Gastrocnemius medialis (tissue), 4 donors: ENCODE measurements at regions of chr12 and their contacts with region 1.

Region 1: DNA sequence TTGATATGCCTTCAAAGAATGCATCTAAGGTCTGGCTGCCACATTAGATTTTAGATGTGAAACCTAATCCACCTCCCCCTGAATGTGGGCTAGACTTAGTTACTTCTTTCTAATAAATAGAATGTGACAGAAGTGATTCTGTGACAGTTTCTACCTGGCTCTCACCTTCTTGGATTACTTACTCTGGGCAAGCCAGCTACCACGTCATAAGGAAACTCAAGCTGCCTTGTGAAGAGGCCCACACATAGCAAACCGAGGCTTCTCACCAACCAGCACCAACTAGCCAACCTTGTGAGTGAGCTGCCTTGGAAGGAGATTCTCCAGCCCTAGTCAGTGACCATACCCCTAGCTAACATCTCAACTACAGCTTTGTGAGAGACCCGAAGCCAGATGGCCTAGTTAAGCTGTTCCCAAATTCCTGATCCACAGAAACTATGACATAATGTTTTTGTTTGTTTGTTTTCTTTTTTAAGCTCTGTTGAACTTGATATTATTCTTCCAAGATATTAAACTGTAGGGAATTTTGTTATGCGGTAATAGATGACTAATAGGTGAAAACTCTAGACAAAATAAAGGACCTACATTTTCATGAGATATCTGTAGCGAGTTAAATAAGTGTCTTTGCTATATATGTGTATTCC is 6.2 kb downstream of the GPR19 start:
- DNase-seq: no peak
- ATAC-seq: no peak
- H3K4me3 ChIP-seq: no peak overlapping the region
- H3K27ac ChIP-seq: no peak overlapping the region
- H3K4me1 ChIP-seq: peaks cover under 1 to 3% of the 10 kb centered on the region in 2 donors
- H3K27me3 ChIP-seq: no peaks in the 10 kb centered on the region
- CTCF ChIP-seq: no peak
- POLR2A ChIP-seq: no peak

Region 2: GRCh38 chr12:12654691-12655460 is 34.9 kb before region 1 on chr12:
- in situ Hi-C with region 1: no loop called
- intact Hi-C with region 1: loop called (anchors 5 kb)
- DNase-seq: no peak
- ATAC-seq: no peak
- H3K4me3 ChIP-seq: no peak overlapping the region
- H3K27ac ChIP-seq: no peak overlapping the region
- H3K4me1 ChIP-seq: no peaks in the 10 kb centered on the region
- H3K27me3 ChIP-seq: no peaks in the 10 kb centered on the region
- CTCF ChIP-seq: no peak
- POLR2A ChIP-seq: no peak